ENCODE measurements at regions of chr10 and their contacts with region 1.

Region 1: GRCh38 chr10:127407551-127407950 is 141.6 kb upstream of the NPS start:
- DNase-seq: no peak
- ATAC-seq: no peak
- H3K4me3 ChIP-seq: no peak overlapping the region
- H3K27ac ChIP-seq: no peak overlapping the region
- H3K4me1 ChIP-seq: peaks cover 17% of the 10 kb centered on the region
- H3K27me3 ChIP-seq: no peaks in the 10 kb centered on the region
- CTCF ChIP-seq: no peak
- EP300 ChIP-seq: no peak
- POLR2A ChIP-seq: no peak
- RAD21 ChIP-seq: no peak

Region 2: GRCh38 chr10:127186813-127187212 is 220.7 kb before region 1 on chr10:
- CTCF ChIA-PET with region 1: no interaction called
- POLR2A ChIA-PET with region 1: no interaction called
- in situ Hi-C with region 1: no loop called
- intact Hi-C with region 1: no loop called
- DNase-seq: no peak
- ATAC-seq: no peak
- H3K4me3 ChIP-seq: no peak overlapping the region
- H3K27ac ChIP-seq: no peak overlapping the region
- H3K4me1 ChIP-seq: no peaks in the 10 kb centered on the region
- H3K27me3 ChIP-seq: no peaks in the 10 kb centered on the region
- CTCF ChIP-seq: no peak
- EP300 ChIP-seq: no peak
- POLR2A ChIP-seq: no peak
- RAD21 ChIP-seq: no peak

Region 3: DNA sequence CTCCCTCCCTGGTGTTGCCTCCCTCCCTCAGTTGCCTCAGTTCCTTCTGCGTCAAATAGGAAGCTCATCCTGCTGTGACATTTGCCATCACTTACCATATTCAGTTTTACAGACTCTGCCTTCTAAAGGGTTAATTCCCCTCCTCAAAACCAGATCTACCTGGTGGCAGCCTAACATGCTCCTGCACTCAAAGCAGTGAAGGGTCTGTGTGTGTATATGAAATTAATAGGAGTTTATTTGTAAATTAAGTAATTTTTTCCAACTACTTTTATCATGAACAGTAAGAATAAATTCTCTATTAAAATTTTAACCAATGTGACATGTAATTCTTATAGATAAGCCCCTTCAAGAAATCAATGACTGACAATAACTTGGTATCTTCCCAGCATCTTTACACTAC is 52.6 kb before region 1 on chr10:
- CTCF ChIA-PET with region 1: no interaction called
- POLR2A ChIA-PET with region 1: no interaction called
- in situ Hi-C with region 1: no loop called
- intact Hi-C with region 1: no loop called
- DNase-seq: no peak
- ATAC-seq: no peak
- H3K4me3 ChIP-seq: no peak overlapping the region
- H3K27ac ChIP-seq: no peak overlapping the region
- H3K4me1 ChIP-seq: no peaks in the 10 kb centered on the region
- H3K27me3 ChIP-seq: no peaks in the 10 kb centered on the region
- CTCF ChIP-seq: 0 out of 2 replicates have a peak, but pooled peaks have one; percentile 11
- EP300 ChIP-seq: no peak
- POLR2A ChIP-seq: no peak
- RAD21 ChIP-seq: no peak

Region 4: DNA sequence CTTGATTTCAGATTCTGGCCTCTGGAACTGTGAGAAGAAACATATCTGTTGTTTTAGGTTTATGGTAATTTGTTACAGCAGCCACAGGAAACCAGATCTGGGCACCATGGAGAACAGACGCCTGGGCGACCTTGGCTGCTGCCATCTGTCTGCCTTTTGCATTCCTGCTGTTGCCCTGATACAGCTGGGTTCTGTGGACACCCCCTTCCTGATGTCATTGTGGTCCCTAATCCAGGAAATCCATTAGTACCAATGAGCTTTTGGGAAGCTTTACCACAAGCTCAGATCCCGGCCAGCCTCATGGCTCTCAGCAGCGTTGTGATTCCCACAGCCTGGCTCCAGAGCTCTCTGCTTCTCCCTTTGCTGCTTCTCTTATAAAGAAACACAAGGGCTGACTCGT is 32.6 kb before region 1 on chr10:
- CTCF ChIA-PET with region 1: no interaction called
- POLR2A ChIA-PET with region 1: no interaction called
- in situ Hi-C with region 1: no loop called
- intact Hi-C with region 1: loop called (anchors 1 kb)
- DNase-seq: no peak
- ATAC-seq: no peak
- H3K4me3 ChIP-seq: no peak overlapping the region
- H3K27ac ChIP-seq: no peak overlapping the region
- H3K4me1 ChIP-seq: no peaks in the 10 kb centered on the region
- H3K27me3 ChIP-seq: no peaks in the 10 kb centered on the region
- CTCF ChIP-seq: no peak
- EP300 ChIP-seq: no peak
- POLR2A ChIP-seq: no peak
- RAD21 ChIP-seq: no peak

Region 5: GRCh38 chr10:127424594-127425264 is 17.2 kb after region 1 on chr10:
- CTCF ChIA-PET with region 1: no interaction called
- POLR2A ChIA-PET with region 1: no interaction called
- in situ Hi-C with region 1: no loop called
- intact Hi-C with region 1: no loop called
- DNase-seq: no peak
- ATAC-seq: no peak
- H3K4me3 ChIP-seq: no peak overlapping the region
- H3K27ac ChIP-seq: no peak overlapping the region
- H3K4me1 ChIP-seq: no peaks in the 10 kb centered on the region
- H3K27me3 ChIP-seq: no peaks in the 10 kb centered on the region
- CTCF ChIP-seq: no peak
- EP300 ChIP-seq: no peak
- POLR2A ChIP-seq: no peak
- RAD21 ChIP-seq: no peak

Region 6: DNA sequence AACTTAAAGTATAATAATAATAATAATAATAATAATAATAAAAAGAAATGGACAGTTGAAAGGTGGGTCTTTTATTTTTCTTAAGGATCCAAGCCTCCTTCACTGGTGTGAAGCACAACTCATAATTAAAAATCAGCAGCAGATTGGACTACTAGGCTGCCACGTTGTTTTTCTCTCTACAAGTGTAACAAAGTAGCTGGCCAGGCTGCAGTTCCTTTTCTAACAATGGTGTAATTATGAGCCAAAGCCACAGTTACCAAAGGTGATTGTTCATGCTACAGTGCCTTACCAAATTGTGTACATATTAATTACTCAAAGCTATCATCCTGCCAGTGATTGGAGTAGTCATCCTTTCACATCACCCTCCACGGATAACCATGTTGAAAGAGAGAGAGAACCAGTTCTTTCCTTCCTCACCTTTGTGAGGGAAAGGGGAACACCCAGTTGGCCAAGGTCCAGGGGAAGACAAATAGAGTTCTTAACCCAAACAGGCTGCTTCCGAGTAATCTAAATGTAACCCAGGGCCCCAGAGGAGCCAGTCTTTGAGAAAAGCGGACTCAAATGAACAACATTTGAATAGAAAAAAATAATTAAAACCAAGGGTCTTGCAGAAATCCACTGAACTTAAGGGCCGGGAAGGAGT is 55.2 kb after region 1 on chr10:
- CTCF ChIA-PET with region 1: no interaction called
- POLR2A ChIA-PET with region 1: no interaction called
- in situ Hi-C with region 1: no loop called
- intact Hi-C with region 1: no loop called
- DNase-seq: peak; percentile 4
- ATAC-seq: peak; percentile 39; the same call in 1 of the 3 replicates
- H3K4me3 ChIP-seq: no peak overlapping the region
- H3K27ac ChIP-seq: no peak overlapping the region
- H3K4me1 ChIP-seq: no peaks in the 10 kb centered on the region
- H3K27me3 ChIP-seq: peaks cover 7 to 26% of the 10 kb centered on the region in 2 experiments; a peak in 4 of 5 replicates
- CTCF ChIP-seq: no peak
- EP300 ChIP-seq: no peak
- POLR2A ChIP-seq: no peak
- RAD21 ChIP-seq: no peak